ENCODE measurements at regions of chr10 and their contacts with region 1.

Region 1: DNA sequence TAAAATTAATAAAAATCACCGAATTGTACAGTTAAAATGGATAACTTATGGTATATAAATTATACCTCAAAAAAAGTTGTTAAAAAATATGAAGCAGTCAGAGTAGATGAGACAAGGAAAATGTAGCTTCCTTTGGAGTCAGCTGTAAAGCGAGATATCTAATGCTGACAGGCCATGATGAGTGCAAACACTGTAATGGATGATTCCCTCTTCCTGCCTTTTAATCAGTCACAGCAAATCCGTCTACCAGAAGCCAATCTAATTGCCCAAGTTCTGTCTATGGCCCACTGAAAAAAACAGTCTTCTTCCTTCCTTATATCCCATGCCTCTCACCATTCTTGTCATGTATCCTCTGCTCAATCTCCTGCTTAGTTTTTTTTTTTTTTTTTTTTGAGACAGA is 59.9 kb upstream of the DNAJB12 start:
- DNase-seq: no peak
- H3K4me3 ChIP-seq: no peak overlapping the region
- H3K27ac ChIP-seq: no peak overlapping the region
- H3K4me1 ChIP-seq: no peaks in the 10 kb centered on the region
- H3K27me3 ChIP-seq: no peaks in the 10 kb centered on the region
- CTCF ChIP-seq: no peak
- POLR2A ChIP-seq: no peak

Region 2: GRCh38 chr10:71390461-71390835 is 1024.2 kb before region 1 on chr10:
- intact Hi-C with region 1: loop called (anchors 5 kb)
- DNase-seq: peak in 1 of 2 donors; percentile 25
- H3K4me3 ChIP-seq: no peak overlapping the region
- H3K27ac ChIP-seq: no peak overlapping the region
- H3K4me1 ChIP-seq: no peaks in the 10 kb centered on the region
- H3K27me3 ChIP-seq: no peaks in the 10 kb centered on the region
- CTCF ChIP-seq: no peak
- POLR2A ChIP-seq: no peak

Region 3: DNA sequence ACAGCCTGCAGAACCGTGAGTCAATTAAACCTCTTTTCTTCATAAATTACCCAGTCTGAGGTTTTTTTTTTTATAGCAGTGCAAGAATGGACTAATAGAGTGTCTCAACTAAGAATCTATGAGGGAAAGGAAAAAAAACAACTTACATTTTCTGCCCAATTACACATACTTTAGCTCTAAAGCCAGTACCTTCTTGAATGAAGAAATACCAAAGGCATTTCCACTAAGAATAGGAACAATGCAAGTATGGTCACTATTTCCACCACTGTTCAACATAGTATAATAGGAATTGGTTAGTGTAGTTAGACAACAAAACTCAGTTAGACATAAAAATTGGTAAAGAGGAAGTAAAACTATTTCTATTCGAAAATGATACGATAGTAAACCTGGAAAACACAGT is 173.6 kb after region 1 on chr10:
- intact Hi-C with region 1: no loop called
- DNase-seq: no peak
- H3K4me3 ChIP-seq: no peak overlapping the region
- H3K27ac ChIP-seq: no peak overlapping the region
- H3K4me1 ChIP-seq: no peaks in the 10 kb centered on the region
- H3K27me3 ChIP-seq: no peaks in the 10 kb centered on the region
- CTCF ChIP-seq: no peak
- POLR2A ChIP-seq: no peak